Left colon (tissue), 2 donors: ENCODE measurements at regions of chr16 and their contacts with region 1.

Region 1: GRCh38 chr16:29926005-29926710 is at the start of gene KCTD13:
- DNase-seq: peak; percentile 76 to 85
- ATAC-seq: peak; percentile 95
- total RNA-seq, gene KCTD13: 22.2 to 35.2 TPM

Region 2: DNA sequence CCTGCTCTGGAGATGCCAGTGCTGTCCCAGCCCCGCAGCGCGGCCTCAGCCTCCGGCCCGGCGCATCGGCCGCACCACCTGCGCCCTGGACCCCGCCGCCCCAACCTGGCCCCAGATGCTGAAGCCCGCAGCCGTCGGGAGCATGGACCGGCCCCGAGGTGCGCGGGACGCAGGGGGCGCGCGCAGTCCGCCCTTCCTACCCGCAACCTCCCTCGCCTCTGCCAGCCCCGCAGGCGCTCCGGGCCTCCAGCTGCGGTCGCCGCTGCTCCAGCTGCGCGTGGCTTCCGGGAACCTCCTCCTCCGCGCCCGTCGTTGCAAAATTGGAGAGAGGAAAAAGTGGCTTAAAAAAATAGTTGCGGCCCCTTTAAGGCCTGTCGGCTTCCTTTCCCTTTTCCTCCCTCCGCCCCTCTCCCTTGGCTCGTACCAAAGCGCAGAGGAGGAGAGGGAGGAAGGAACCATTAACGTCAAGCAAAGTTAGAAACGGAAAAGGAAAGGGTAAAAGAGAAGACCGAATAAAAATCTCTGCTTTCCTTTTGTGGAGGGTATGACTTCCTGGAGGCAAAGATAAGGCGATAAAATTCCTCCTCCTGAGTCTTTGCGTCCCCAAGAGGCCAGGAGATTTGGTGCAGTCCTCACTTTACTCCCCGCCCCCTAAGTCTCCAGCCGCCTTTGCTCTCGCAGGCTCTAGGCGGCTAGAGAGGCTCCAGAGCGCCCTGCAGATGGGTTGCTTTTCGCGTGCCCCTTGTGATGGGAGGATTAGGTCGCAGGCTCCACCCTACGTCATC is 63.1 kb before region 1 on chr16 and contains the start of gene CDIPT:
- intact Hi-C with region 1: loop called in 1 of 2 experiments (anchors 10 kb)
- DNase-seq: peak; percentile 93 to 96
- ATAC-seq: peak; percentile 93
- total RNA-seq, gene CDIPT: 62.9 to 85.3 TPM

Region 3: GRCh38 chr16:29973384-29974246 is 47.5 kb after region 1 on chr16 and contains the start of gene TAOK2:
- intact Hi-C with region 1: loop called in 1 of 2 experiments (anchors 10 kb)
- DNase-seq: peak; percentile 96 to 98
- ATAC-seq: peak; percentile 96
- total RNA-seq, gene TAOK2: 44.5 TPM

Region 4: GRCh38 chr16:30005341-30006094 is 79.4 kb after region 1 on chr16:
- intact Hi-C with region 1: loop called in 1 of 2 experiments (anchors 10 kb)
- DNase-seq: no peak
- ATAC-seq: peak; percentile 70